ENCODE measurements at regions of chr1 and their contacts with region 1.

Region 1: DNA sequence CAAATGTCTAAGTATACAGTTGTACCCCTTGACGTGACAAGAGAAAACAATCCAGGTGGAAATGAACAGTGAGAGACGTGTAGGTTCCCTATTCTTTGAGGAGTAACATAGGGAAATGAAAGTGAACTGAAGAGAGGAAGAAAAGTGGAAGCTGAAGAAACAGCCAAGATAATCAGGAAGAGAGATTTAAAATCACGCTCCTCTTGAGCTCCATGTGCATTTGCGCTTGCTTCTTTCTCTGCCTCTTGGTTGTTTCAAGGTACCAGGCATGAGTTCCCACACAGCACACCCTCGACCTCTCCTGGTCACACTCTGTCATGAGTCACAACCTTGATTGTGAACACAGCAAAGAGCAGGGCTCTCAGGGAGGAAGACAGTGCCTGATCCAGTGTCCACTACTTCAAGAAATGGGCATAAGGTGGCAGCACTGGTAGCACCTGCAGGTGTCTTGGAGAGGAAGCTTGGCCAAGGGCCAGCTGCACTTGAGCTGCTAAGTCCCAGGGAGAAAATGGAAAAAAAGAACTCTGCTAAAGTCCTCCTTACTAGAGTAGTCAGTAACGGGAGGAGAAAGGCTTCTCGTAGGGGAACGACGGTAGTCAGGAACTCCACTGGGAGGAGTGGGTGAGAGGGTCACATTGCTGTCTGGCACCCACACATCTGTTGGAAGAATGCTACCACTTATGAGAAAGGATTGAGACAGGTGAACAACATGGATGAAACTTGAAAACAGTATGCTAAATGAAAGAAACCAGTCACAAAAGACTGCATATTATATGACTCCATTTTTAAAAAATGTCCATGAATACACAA is 18.3 kb upstream of the ARID1A start:
- DNase-seq: peak; percentile 57
- ATAC-seq: peak; percentile 100
- H3K4me3 Mint-ChIP-seq: no peak overlapping the region
- H3K27ac Mint-ChIP-seq: peak overlapping the region; percentile 9; the same call in 1 of the 2 replicates
- H3K4me1 Mint-ChIP-seq: peaks cover 8% of the 10 kb centered on the region
- H3K27me3 Mint-ChIP-seq: no peaks in the 10 kb centered on the region
- CTCF ChIP-seq: no peak

Region 2: DNA sequence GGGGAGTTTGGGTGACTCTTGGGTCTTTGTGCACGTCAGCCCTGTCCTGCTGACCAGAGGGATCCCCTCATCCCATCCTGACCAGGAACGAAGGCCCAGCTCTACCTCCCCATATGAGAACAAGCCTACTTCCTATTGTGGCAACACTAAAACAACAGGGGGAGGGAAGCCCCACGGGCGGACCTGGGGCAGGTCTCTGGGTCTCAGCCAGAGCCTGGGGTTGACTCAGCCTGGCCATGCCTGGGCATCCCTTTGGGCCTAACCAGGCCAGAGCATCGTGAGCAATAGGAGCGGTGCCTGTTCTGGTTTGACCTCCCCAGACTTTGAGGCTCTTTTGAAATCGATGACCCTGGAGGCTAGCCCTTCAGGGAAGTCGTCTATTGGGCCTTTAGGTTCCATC is 131.1 kb before region 1 on chr1:
- CTCF ChIA-PET with region 1: no interaction called
- POLR2A ChIA-PET with region 1: no interaction called
- DNase-seq: no peak
- ATAC-seq: no peak
- H3K4me3 Mint-ChIP-seq: no peak overlapping the region
- H3K27ac Mint-ChIP-seq: no peak overlapping the region
- H3K4me1 Mint-ChIP-seq: peaks cover 17% of the 10 kb centered on the region
- H3K27me3 Mint-ChIP-seq: no peaks in the 10 kb centered on the region
- CTCF ChIP-seq: no peak

Region 3: GRCh38 chr1:26602378-26602959 is 75.0 kb before region 1 on chr1:
- CTCF ChIA-PET with region 1: interaction called, 34 read pairs
- POLR2A ChIA-PET with region 1: no interaction called
- DNase-seq: no peak
- ATAC-seq: no peak
- H3K4me3 Mint-ChIP-seq: no peak overlapping the region
- H3K27ac Mint-ChIP-seq: no peak overlapping the region
- H3K4me1 Mint-ChIP-seq: peaks cover 23% of the 10 kb centered on the region
- H3K27me3 Mint-ChIP-seq: no peaks in the 10 kb centered on the region; the same call in 1 of the 2 replicates
- CTCF ChIP-seq: peak; percentile 61; the same call in 1 of the 2 replicates

Region 4: DNA sequence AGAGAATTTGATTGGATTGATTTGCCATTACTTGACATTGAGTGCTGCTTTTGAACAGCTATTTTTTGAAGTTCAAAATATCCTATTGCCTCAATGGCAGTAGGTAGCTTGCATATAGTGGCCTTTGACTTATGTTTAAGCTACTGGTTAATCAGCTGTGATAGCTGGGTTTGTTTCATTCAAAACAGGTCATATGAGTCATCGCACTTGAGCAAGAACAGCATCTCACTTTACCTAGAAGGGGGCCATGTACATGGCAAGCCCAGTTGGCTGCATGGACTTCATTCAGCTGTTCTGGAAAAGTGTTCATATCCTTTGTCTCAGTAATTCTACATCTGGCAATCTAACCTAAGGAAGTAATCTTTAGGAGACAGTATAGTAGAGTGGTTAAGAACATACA is 10.7 kb before region 1 on chr1:
- CTCF ChIA-PET with region 1: interaction called, 22 read pairs
- POLR2A ChIA-PET with region 1: no interaction called
- DNase-seq: no peak
- ATAC-seq: no peak
- H3K4me3 Mint-ChIP-seq: no peak overlapping the region
- H3K27ac Mint-ChIP-seq: no peak overlapping the region
- H3K4me1 Mint-ChIP-seq: peaks cover 5% of the 10 kb centered on the region
- H3K27me3 Mint-ChIP-seq: no peaks in the 10 kb centered on the region
- CTCF ChIP-seq: no peak

Region 5: DNA sequence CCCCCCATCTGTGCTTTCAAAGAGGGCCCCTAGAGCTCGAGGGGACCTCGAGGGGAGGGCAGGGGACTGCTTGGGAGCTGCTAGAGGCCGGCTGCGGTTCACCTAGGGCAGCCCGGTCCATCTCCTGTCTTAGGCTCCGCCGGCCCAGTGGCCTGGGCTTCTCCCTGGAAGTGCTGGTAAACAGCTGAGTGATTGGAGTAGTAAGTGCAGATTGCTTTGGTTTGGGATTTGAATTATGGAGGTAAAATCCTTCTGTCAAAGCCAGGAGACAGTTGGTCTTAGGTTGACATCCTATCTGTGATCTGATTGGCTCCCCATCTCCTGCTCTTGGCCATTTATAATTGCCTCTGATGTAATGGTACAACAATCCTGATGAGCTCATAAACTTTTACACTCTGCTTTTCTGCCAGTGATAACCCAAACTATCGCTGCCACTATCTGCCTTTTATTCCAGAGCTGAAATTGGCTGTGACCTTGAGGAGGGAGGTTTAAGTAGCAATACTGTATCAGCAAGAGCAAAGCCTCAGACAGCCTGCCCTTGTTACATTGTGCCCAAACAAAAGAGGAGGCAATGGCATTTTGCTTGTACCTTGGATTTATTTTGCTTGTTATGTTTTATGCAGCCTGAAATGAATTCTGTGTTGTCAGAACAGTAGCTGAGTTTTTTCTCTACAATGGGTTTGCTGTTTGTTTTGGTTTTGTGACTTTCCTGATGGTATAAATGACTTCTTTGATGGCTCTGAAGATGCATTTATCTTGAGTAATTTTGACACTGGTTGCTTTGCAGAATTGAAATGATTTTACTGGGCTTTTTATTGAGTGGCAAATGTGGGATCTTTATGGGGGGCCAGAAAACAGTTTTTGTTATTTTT is 20.7 kb after region 1 on chr1:
- CTCF ChIA-PET with region 1: interaction called, 54 read pairs
- POLR2A ChIA-PET with region 1: interaction called, 4 read pairs
- DNase-seq: peak; percentile 22
- ATAC-seq: no peak; the same call in none of the 2 replicates
- H3K4me3 Mint-ChIP-seq: no peak overlapping the region
- H3K27ac Mint-ChIP-seq: no peak overlapping the region
- H3K4me1 Mint-ChIP-seq: peaks cover 17% of the 10 kb centered on the region
- H3K27me3 Mint-ChIP-seq: no peaks in the 10 kb centered on the region
- CTCF ChIP-seq: no peak

Region 6: DNA sequence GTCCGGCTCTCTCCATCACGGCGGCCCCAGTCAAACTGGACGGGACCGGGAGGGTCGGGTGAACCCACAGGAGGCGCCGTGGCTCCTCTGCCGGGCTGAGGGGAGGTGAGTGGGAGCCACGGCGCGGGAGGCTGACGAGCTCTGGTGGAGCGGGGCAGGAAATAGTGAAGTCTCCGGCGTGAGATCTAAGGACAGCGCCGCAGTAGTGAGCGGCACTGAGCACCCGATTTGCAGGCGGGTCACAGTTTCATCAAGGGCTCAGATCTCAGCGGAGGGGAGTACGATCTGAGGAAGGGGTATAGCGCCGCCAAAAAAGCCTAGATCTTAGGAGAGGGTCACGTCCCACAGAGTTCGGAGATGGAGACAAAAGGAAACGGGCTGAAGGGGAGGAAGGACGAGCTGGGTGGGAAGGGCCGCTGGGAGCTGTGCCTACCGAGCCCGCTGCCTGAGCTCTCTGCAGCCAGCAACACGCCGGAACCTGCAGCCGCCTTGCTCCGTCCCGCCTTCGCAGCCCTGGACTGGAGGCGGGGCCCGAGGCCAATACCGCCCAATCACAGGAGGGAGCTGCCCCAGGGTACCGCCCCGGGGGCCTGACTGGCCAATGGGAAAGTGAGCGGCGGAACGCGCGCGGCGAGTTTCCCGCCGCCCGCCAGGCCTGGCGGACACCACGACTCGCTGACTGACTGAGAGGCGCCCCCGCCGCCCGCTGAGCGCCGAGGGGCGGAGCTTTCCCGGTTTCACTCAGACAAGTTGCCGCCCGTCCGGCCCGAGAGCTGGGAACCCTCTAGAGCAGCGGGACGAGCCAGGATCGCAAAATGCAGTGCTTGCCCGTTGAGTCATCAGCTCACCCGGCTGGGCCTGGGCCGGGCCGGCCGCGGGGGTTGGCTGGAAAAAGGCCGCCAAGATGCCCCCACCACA is 187.4 kb after region 1 on chr1:
- CTCF ChIA-PET with region 1: interaction called, 11 read pairs
- POLR2A ChIA-PET with region 1: no interaction called
- DNase-seq: peak; percentile 98
- ATAC-seq: peak; percentile 87
- H3K4me3 Mint-ChIP-seq: peak overlapping the region; percentile 94
- H3K27ac Mint-ChIP-seq: peak overlapping the region; percentile 96
- H3K4me1 Mint-ChIP-seq: peaks cover 50% of the 10 kb centered on the region
- H3K27me3 Mint-ChIP-seq: peaks cover 16% of the 10 kb centered on the region
- CTCF ChIP-seq: no peak

Measured in WTC11 (cell line).